Cardiac septum (tissue), 1 donor: ENCODE measurements at regions of chr12 and their contacts with region 1.

Region 1: DNA sequence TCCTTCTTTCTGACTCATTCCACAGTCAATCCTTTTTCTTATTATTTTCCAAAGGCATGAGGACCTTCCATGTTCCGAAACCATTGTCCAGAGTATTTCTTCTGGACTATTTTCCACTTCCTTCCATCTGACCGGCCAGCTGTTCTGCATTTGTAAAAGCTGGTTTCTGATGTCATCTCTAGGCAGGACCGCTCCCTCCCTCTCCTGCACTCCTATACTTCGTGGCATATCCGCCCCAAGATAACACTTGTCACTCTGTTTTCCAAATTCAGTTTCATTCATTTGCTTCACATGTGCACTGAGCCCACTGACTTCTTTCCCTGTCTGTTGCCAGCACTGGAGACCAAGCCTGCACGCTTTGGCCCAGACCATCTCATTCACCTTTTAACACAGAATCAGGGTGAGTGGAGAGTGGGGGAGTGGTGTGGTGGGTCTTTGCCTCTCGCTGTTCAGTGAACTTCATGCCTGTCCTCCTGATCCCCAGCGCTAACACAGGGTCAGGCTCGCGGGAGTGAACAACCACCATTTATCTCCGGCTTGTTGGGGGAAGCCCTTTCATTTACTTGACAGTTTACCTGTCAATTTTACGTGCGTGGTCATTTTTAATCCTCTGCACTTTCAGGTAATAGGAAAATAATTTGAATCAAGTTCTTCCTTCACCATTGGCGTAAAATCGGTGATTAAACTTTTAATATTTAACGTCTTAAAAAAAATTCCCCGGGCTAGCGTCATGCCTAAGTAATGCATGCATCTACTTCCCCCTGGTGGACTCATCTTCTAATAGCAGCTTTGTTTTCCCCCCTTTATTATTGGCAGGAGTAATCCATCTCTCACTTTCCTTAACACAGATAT is 52.5 kb downstream of the C12orf75 start:
- DNase-seq: no peak

Region 2: GRCh38 chr12:105279460-105280056 is 103.4 kb before region 1 on chr12:
- intact Hi-C with region 1: loop called (anchors 5 kb)
- DNase-seq: no peak

Region 3: GRCh38 chr12:105676694-105677093 is 293.7 kb after region 1 on chr12:
- intact Hi-C with region 1: no loop called
- DNase-seq: no peak